CD8-positive, alpha-beta T cell (primary cell): ENCODE measurements at regions of chr1 and their contacts with region 1.

Region 1: DNA sequence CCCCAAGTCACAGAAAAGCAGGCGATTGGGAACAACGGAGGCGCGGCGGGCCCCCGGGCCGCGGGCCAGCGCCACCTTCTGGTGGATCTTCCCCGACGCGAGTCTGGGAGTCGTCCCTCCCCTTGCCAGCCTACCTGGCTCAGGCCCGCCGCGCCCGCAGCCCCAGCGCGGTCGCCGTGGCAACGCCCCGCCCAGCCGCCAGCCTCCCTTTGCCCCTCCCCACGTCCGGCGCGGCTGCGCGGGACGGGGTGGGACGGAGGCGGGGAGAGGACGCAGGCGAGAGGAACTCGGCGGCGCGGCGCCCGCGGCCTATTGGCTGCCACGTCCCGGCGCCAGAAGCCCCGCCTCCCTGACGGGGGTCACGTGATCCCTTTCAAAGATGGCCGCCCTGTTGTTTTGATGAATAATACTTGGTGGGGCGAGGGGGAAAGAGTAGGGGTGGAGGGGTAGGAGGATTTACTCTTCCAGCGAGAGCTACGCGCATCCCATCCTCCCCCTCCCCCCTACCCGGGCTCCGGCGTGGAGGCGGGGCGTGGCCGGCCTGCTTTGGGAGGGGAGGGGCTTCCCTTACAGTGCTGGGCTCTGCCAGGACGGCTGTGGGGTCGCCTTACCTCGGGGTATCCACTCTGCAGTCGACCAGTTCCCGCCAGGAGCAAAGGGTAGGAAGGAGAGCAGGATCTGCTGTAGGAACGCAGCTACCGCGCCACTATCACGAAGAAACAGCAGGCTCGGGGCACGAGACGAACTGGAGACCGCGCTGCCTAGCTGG is at the start of gene UBE4B:
- DNase-seq: peak; percentile 96 to 100 (median 99)
- ATAC-seq: peak; percentile 94
- H3K4me3 ChIP-seq: peak within 1 kb of the TSS; percentile 95 to 98
- H3K4me3 Mint-ChIP-seq: peak within 1 kb of the TSS; percentile 97
- H3K27ac ChIP-seq: peak within 1 kb of the TSS; percentile 93 to 94
- H3K27ac Mint-ChIP-seq: peak within 1 kb of the TSS; percentile 98
- H3K4me1 ChIP-seq: peaks cover 18% of the 10 kb centered on the region
- H3K4me1 Mint-ChIP-seq: peaks cover 23% of the 10 kb centered on the region
- H3K27me3 ChIP-seq: no peaks in the 10 kb centered on the region
- H3K27me3 Mint-ChIP-seq: no peaks in the 10 kb centered on the region
- CTCF ChIP-seq: peak; percentile 89
- total RNA-seq, gene UBE4B: 25.8 to 32.2 TPM

Region 2: GRCh38 chr1:9539165-9539828 is 493.5 kb before region 1 on chr1 and contains the start of gene SLC25A33:
- CTCF ChIA-PET with region 1: no interaction called
- POLR2A ChIA-PET with region 1: no interaction called
- intact Hi-C with region 1: loop called (anchors 2 kb)
- DNase-seq: peak; percentile 91 to 99 (median 96)
- ATAC-seq: peak; percentile 99
- H3K4me3 ChIP-seq: peak within 1 kb of the TSS; percentile 62 to 68
- H3K4me3 Mint-ChIP-seq: peak within 1 kb of the TSS; percentile 90
- H3K27ac ChIP-seq: peak within 1 kb of the TSS; percentile 59 to 83
- H3K27ac Mint-ChIP-seq: peak within 1 kb of the TSS; percentile 91
- H3K4me1 ChIP-seq: peaks cover 19% of the 10 kb centered on the region
- H3K4me1 Mint-ChIP-seq: peaks cover 33% of the 10 kb centered on the region
- H3K27me3 ChIP-seq: no peaks in the 10 kb centered on the region
- H3K27me3 Mint-ChIP-seq: no peaks in the 10 kb centered on the region
- CTCF ChIP-seq: no peak
- total RNA-seq, gene SLC25A33: 10.1 to 11.2 TPM

Region 3: GRCh38 chr1:9784508-9785133 is 248.2 kb before region 1 on chr1:
- CTCF ChIA-PET with region 1: no interaction called
- POLR2A ChIA-PET with region 1: no interaction called
- intact Hi-C with region 1: loop called in 1 of 2 experiments (anchors 5 kb)
- DNase-seq: peak; percentile 36 to 84 (median 66)
- ATAC-seq: peak; percentile 54
- H3K4me3 ChIP-seq: no peak overlapping the region
- H3K4me3 Mint-ChIP-seq: no peak overlapping the region
- H3K27ac ChIP-seq: no peak overlapping the region
- H3K27ac Mint-ChIP-seq: no peak overlapping the region
- H3K4me1 ChIP-seq: peaks cover 20% of the 10 kb centered on the region
- H3K4me1 Mint-ChIP-seq: peaks cover 33% of the 10 kb centered on the region
- H3K27me3 ChIP-seq: no peaks in the 10 kb centered on the region
- H3K27me3 Mint-ChIP-seq: no peaks in the 10 kb centered on the region
- CTCF ChIP-seq: peak; percentile 80

Region 4: GRCh38 chr1:9942939-9943788 is 89.6 kb before region 1 on chr1 and contains the starts of genes LZIC and NMNAT1:
- CTCF ChIA-PET with region 1: interaction called, 3 read pairs
- POLR2A ChIA-PET with region 1: no interaction called
- intact Hi-C with region 1: loop called (anchors 1 kb)
- DNase-seq: peak; percentile 74 to 94 (median 89)
- ATAC-seq: peak; percentile 91
- H3K4me3 ChIP-seq: peak within 1 kb of the TSS; percentile 82 to 88
- H3K4me3 Mint-ChIP-seq: peak within 1 kb of the TSS; percentile 89
- H3K27ac ChIP-seq: peak within 1 kb of the TSS; percentile 88 to 90
- H3K27ac Mint-ChIP-seq: peak within 1 kb of the TSS; percentile 90
- H3K4me1 ChIP-seq: peaks cover 20% of the 10 kb centered on the region
- H3K4me1 Mint-ChIP-seq: peaks cover 31% of the 10 kb centered on the region
- H3K27me3 ChIP-seq: no peaks in the 10 kb centered on the region
- H3K27me3 Mint-ChIP-seq: no peaks in the 10 kb centered on the region
- CTCF ChIP-seq: no peak
- total RNA-seq, gene LZIC: 12.9 to 13.6 TPM
- total RNA-seq, gene NMNAT1: 1.1 to 1.2 TPM

Region 5: DNA sequence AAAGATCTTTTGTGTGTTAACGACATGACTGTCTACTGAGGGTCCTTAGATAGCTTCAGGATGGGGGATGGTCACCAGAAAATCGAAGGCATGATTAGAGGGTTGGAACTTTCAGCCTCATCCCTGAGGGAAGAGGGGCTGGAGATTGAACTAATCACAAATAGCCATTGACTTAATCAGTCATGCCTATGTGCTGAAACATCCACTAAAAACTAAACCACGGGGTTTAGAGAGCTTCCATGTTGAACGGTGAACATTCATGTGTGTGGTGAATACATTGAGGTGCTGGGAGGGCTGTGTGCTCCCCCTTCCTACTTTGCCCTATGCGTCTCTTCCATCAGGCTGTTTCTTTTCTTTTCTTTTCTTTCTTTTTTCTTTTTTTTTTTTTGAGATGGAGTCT is 18.8 kb before region 1 on chr1:
- CTCF ChIA-PET with region 1: no interaction called
- POLR2A ChIA-PET with region 1: no interaction called
- intact Hi-C with region 1: no loop called
- DNase-seq: no peak
- ATAC-seq: no peak
- H3K4me3 ChIP-seq: no peak overlapping the region
- H3K4me3 Mint-ChIP-seq: no peak overlapping the region
- H3K27ac ChIP-seq: no peak overlapping the region
- H3K27ac Mint-ChIP-seq: no peak overlapping the region
- H3K4me1 ChIP-seq: no peaks in the 10 kb centered on the region
- H3K4me1 Mint-ChIP-seq: no peaks in the 10 kb centered on the region
- H3K27me3 ChIP-seq: no peaks in the 10 kb centered on the region
- H3K27me3 Mint-ChIP-seq: peaks cover 5% of the 10 kb centered on the region
- CTCF ChIP-seq: no peak

Region 6: GRCh38 chr1:10407201-10407600 is 374.4 kb after region 1 on chr1:
- CTCF ChIA-PET with region 1: no interaction called
- POLR2A ChIA-PET with region 1: no interaction called
- intact Hi-C with region 1: no loop called
- DNase-seq: no peak
- ATAC-seq: no peak
- H3K4me3 ChIP-seq: no peak overlapping the region
- H3K4me3 Mint-ChIP-seq: no peak overlapping the region
- H3K27ac ChIP-seq: no peak overlapping the region
- H3K27ac Mint-ChIP-seq: no peak overlapping the region
- H3K4me1 ChIP-seq: no peaks in the 10 kb centered on the region
- H3K4me1 Mint-ChIP-seq: no peaks in the 10 kb centered on the region
- H3K27me3 ChIP-seq: no peaks in the 10 kb centered on the region
- H3K27me3 Mint-ChIP-seq: no peaks in the 10 kb centered on the region
- CTCF ChIP-seq: no peak

Region 7: GRCh38 chr1:10430216-10431069 is 397.7 kb after region 1 on chr1 and contains the start of gene CENPS:
- CTCF ChIA-PET with region 1: no interaction called
- POLR2A ChIA-PET with region 1: interaction called, 3 read pairs
- intact Hi-C with region 1: loop called in 1 of 2 experiments (anchors 1 kb)
- DNase-seq: peak; percentile 72 to 95 (median 92)
- ATAC-seq: peak; percentile 85
- H3K4me3 ChIP-seq: peak within 1 kb of the TSS; percentile 85 to 96
- H3K4me3 Mint-ChIP-seq: peak within 1 kb of the TSS; percentile 89
- H3K27ac ChIP-seq: peak within 1 kb of the TSS; percentile 81 to 86
- H3K27ac Mint-ChIP-seq: peak within 1 kb of the TSS; percentile 91
- H3K4me1 ChIP-seq: peaks cover 18% of the 10 kb centered on the region
- H3K4me1 Mint-ChIP-seq: peaks cover 23% of the 10 kb centered on the region
- H3K27me3 ChIP-seq: no peaks in the 10 kb centered on the region
- H3K27me3 Mint-ChIP-seq: no peaks in the 10 kb centered on the region
- CTCF ChIP-seq: peak; percentile 97
- total RNA-seq, gene CENPS: 2.0 to 3.5 TPM